ENCODE measurements at regions of chr14 and their contacts with region 1.

Region 1: GRCh38 chr14:76941946-76942805 is 86.3 kb downstream of the IRF2BPL start:
- DNase-seq: no peak
- ATAC-seq: no peak
- H3K4me3 ChIP-seq: no peak overlapping the region
- H3K27ac ChIP-seq: no peak overlapping the region
- H3K4me1 ChIP-seq: peaks cover 9% of the 10 kb centered on the region
- H3K27me3 ChIP-seq: no peaks in the 10 kb centered on the region
- CTCF ChIP-seq: no peak
- POLR2A ChIP-seq: no peak

Region 2: GRCh38 chr14:76882651-76883050 is 59.5 kb before region 1 on chr14:
- intact Hi-C with region 1: loop called (anchors 5 kb)
- DNase-seq: no peak
- ATAC-seq: no peak
- H3K4me3 ChIP-seq: no peak overlapping the region
- H3K27ac ChIP-seq: no peak overlapping the region
- H3K4me1 ChIP-seq: no peaks in the 10 kb centered on the region
- H3K27me3 ChIP-seq: no peaks in the 10 kb centered on the region
- CTCF ChIP-seq: no peak
- POLR2A ChIP-seq: no peak

Measured in body of pancreas (tissue), 4 donors.